CD4-positive, alpha-beta memory T cell (primary cell): ENCODE measurements at regions of chr10 and their contacts with region 1.

Region 1: GRCh38 chr10:73886085-73886529 is 11.8 kb upstream of the CAMK2G start:
- DNase-seq: peak; percentile 67 to 76 (median 68)
- H3K4me3 ChIP-seq: no peak overlapping the region
- H3K4me3 Mint-ChIP-seq: peak overlapping the region in 1 of 8 donors; percentile 22
- H3K27ac ChIP-seq: no peak overlapping the region
- H3K27ac Mint-ChIP-seq: peak overlapping the region in 3 of 7 donors; percentile 64 to 70 (median 65)
- H3K4me1 ChIP-seq: peaks cover 9% of the 10 kb centered on the region
- H3K4me1 Mint-ChIP-seq: peaks cover 5 to 9% (median 6%) of the 10 kb centered on the region in 4 donors
- H3K27me3 ChIP-seq: no peaks in the 10 kb centered on the region
- H3K27me3 Mint-ChIP-seq: no peaks in the 10 kb centered on the region

Region 2: GRCh38 chr10:73772280-73773151 is 113.6 kb before region 1 on chr10:
- CTCF ChIA-PET with region 1: no interaction called
- POLR2A ChIA-PET with region 1: no interaction called
- intact Hi-C with region 1: no loop called
- DNase-seq: peak; percentile 82 to 88 (median 86)
- H3K4me3 ChIP-seq: peak overlapping the region; percentile 92 to 95
- H3K4me3 Mint-ChIP-seq: peak overlapping the region; percentile 93 to 99 (median 96)
- H3K27ac ChIP-seq: peak overlapping the region; percentile 86
- H3K27ac Mint-ChIP-seq: peak overlapping the region; percentile 84 to 98 (median 96)
- H3K4me1 ChIP-seq: peaks cover 62% of the 10 kb centered on the region
- H3K4me1 Mint-ChIP-seq: peaks cover 36 to 83% (median 50%) of the 10 kb centered on the region in 4 donors
- H3K27me3 ChIP-seq: no peaks in the 10 kb centered on the region
- H3K27me3 Mint-ChIP-seq: no peaks in the 10 kb centered on the region

Region 3: DNA sequence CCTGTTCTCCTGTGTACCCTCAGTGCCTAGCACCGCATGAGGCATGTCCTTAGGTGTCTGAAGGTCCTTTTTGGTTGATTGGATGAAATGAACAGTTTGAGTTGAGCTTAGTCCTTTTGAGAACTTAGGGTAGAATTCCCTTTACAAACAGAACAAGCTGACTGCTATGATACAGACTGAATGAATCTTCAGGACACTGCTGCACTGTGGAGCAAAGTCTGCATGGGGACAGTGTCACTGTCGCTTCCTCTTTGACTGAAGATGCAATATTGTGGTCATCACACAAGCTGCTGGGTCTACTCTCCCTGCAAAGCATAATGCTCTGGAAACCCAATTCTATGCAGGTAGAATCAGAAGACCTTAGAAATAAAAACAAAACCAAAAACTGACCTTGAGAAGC is 16.2 kb after region 1 on chr10:
- CTCF ChIA-PET with region 1: interaction called, 11 read pairs
- POLR2A ChIA-PET with region 1: no interaction called
- intact Hi-C with region 1: no loop called
- DNase-seq: no peak
- H3K4me3 ChIP-seq: no peak overlapping the region
- H3K4me3 Mint-ChIP-seq: no peak overlapping the region
- H3K27ac ChIP-seq: no peak overlapping the region
- H3K27ac Mint-ChIP-seq: no peak overlapping the region
- H3K4me1 ChIP-seq: no peaks in the 10 kb centered on the region
- H3K4me1 Mint-ChIP-seq: no peaks in the 10 kb centered on the region
- H3K27me3 ChIP-seq: no peaks in the 10 kb centered on the region
- H3K27me3 Mint-ChIP-seq: peaks cover 12 to 13% of the 10 kb centered on the region in 2 donors

Region 4: GRCh38 chr10:73956476-73957359 is 70.6 kb after region 1 on chr10:
- CTCF ChIA-PET with region 1: interaction called, 36 read pairs
- POLR2A ChIA-PET with region 1: interaction called, 5 read pairs
- intact Hi-C with region 1: loop called (anchors 1 kb)
- DNase-seq: peak; percentile 64 to 78 (median 72)
- H3K4me3 ChIP-seq: peak overlapping the region; percentile 4 to 30
- H3K4me3 Mint-ChIP-seq: peak overlapping the region; percentile 66 to 94 (median 86)
- H3K27ac ChIP-seq: peak overlapping the region; percentile 52
- H3K27ac Mint-ChIP-seq: peak overlapping the region; percentile 94 to 99 (median 97)
- H3K4me1 ChIP-seq: peaks cover 70% of the 10 kb centered on the region
- H3K4me1 Mint-ChIP-seq: peaks cover 43 to 64% (median 54%) of the 10 kb centered on the region in 4 donors
- H3K27me3 ChIP-seq: no peaks in the 10 kb centered on the region
- H3K27me3 Mint-ChIP-seq: no peaks in the 10 kb centered on the region

Region 5: GRCh38 chr10:73997787-73998622 is 111.9 kb after region 1 on chr10 and contains the start of gene VCL:
- CTCF ChIA-PET with region 1: interaction called, 11 read pairs
- POLR2A ChIA-PET with region 1: no interaction called
- intact Hi-C with region 1: loop called (anchors 2 kb)
- DNase-seq: peak; percentile 95 to 96 (median 95)
- H3K4me3 ChIP-seq: peak within 1 kb of the TSS; percentile 76 to 94
- H3K4me3 Mint-ChIP-seq: peak within 1 kb of the TSS; percentile 99 to 100 (median 100)
- H3K27ac ChIP-seq: peak within 1 kb of the TSS; percentile 87
- H3K27ac Mint-ChIP-seq: peak within 1 kb of the TSS; percentile 81 to 100 (median 99)
- H3K4me1 ChIP-seq: peaks cover 57% of the 10 kb centered on the region
- H3K4me1 Mint-ChIP-seq: peaks cover 33 to 69% (median 51%) of the 10 kb centered on the region in 4 donors
- H3K27me3 ChIP-seq: no peaks in the 10 kb centered on the region
- H3K27me3 Mint-ChIP-seq: no peaks in the 10 kb centered on the region
- total RNA-seq, gene VCL: 29.6 TPM

Region 6: GRCh38 chr10:74081192-74081803 is 195.2 kb after region 1 on chr10:
- CTCF ChIA-PET with region 1: interaction called, 150 read pairs
- POLR2A ChIA-PET with region 1: interaction called, 21 read pairs
- intact Hi-C with region 1: loop called (anchors 1 kb)
- DNase-seq: peak in 4 of 5 donors; percentile 45 to 55 (median 49)
- H3K4me3 ChIP-seq: no peak overlapping the region
- H3K4me3 Mint-ChIP-seq: peak overlapping the region in 1 of 8 donors; percentile 1
- H3K27ac ChIP-seq: no peak overlapping the region
- H3K27ac Mint-ChIP-seq: peak overlapping the region in 6 of 7 donors; percentile 1 to 76 (median 25)
- H3K4me1 ChIP-seq: peaks cover 17% of the 10 kb centered on the region
- H3K4me1 Mint-ChIP-seq: peaks cover 22 to 48% (median 35%) of the 10 kb centered on the region in 4 donors
- H3K27me3 ChIP-seq: no peaks in the 10 kb centered on the region
- H3K27me3 Mint-ChIP-seq: no peaks in the 10 kb centered on the region

Region 7: GRCh38 chr10:74103560-74104248 is 217.6 kb after region 1 on chr10:
- CTCF ChIA-PET with region 1: interaction called, 30 read pairs
- POLR2A ChIA-PET with region 1: no interaction called
- intact Hi-C with region 1: loop called (anchors 5 kb)
- DNase-seq: no peak
- H3K4me3 ChIP-seq: no peak overlapping the region
- H3K4me3 Mint-ChIP-seq: no peak overlapping the region
- H3K27ac ChIP-seq: no peak overlapping the region
- H3K27ac Mint-ChIP-seq: peak overlapping the region in 4 of 7 donors; percentile 9 to 55 (median 52)
- H3K4me1 ChIP-seq: no peaks in the 10 kb centered on the region
- H3K4me1 Mint-ChIP-seq: peaks cover 0 to 4% (median under 1%) of the 10 kb centered on the region in 4 donors
- H3K27me3 ChIP-seq: no peaks in the 10 kb centered on the region
- H3K27me3 Mint-ChIP-seq: no peaks in the 10 kb centered on the region

Region 8: DNA sequence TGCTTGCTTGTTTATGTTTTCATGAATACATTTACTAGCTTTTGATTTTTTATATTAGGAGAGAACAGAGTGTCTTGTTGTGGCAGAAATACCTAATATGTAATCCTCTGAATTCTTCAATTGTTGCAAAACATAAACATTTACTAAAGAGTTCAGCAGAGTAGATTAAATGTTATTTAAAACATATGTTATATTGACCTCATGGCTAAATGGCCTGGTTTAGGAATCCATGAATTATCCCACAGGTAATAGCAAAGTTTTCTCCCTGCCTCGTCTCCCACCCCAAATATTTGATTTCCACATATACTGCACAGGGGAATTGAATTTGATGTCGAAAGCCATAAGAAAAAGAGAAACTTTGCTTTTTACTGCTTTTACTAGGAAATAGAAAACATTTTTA is 376.7 kb after region 1 on chr10:
- CTCF ChIA-PET with region 1: no interaction called
- POLR2A ChIA-PET with region 1: no interaction called
- intact Hi-C with region 1: no loop called
- DNase-seq: no peak
- H3K4me3 ChIP-seq: no peak overlapping the region
- H3K4me3 Mint-ChIP-seq: no peak overlapping the region
- H3K27ac ChIP-seq: no peak overlapping the region
- H3K27ac Mint-ChIP-seq: peak overlapping the region in 2 of 7 donors; percentile 19 to 57
- H3K4me1 ChIP-seq: no peaks in the 10 kb centered on the region
- H3K4me1 Mint-ChIP-seq: peaks cover 0 to 12% (median 7%) of the 10 kb centered on the region in 4 donors
- H3K27me3 ChIP-seq: no peaks in the 10 kb centered on the region
- H3K27me3 Mint-ChIP-seq: no peaks in the 10 kb centered on the region